ENCODE measurements at regions of chr12 and their contacts with region 1.

Region 1: DNA sequence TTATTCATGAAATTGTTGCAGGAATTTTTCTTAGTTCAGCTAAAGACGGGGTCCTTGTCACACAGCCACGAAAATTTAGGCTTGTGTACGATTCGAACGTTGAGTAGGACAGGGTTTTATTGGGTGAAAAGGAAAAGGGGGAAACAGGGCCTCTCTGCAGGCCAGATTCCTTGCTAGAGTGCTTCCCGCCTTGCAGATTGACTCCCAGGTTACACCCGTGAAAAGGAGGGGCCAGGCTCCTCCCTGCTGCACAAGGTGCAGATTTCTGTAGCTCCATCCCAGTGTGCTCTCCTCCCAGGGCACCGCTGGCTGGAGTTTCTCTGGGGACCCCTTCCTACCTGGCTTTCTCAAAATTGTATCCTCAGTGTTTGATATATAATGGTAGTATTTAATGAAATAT is 221.5 kb downstream of the ERC1 start:
- DNase-seq: no peak
- ATAC-seq: no peak
- H3K4me3 Mint-ChIP-seq: no peak overlapping the region
- H3K27ac Mint-ChIP-seq: no peak overlapping the region
- H3K4me1 Mint-ChIP-seq: peaks cover 21% of the 10 kb centered on the region
- H3K27me3 Mint-ChIP-seq: no peaks in the 10 kb centered on the region

Region 2: GRCh38 chr12:1226951-1227350 is 14.4 kb after region 1 on chr12:
- CTCF ChIA-PET with region 1: interaction called, 3 read pairs
- POLR2A ChIA-PET with region 1: interaction called, 5 read pairs
- intact Hi-C with region 1: loop called (anchors 1 kb)
- DNase-seq: no peak
- ATAC-seq: peak; percentile 83
- H3K4me3 Mint-ChIP-seq: no peak overlapping the region
- H3K27ac Mint-ChIP-seq: no peak overlapping the region
- H3K4me1 Mint-ChIP-seq: peaks cover 25% of the 10 kb centered on the region
- H3K27me3 Mint-ChIP-seq: no peaks in the 10 kb centered on the region

Region 3: DNA sequence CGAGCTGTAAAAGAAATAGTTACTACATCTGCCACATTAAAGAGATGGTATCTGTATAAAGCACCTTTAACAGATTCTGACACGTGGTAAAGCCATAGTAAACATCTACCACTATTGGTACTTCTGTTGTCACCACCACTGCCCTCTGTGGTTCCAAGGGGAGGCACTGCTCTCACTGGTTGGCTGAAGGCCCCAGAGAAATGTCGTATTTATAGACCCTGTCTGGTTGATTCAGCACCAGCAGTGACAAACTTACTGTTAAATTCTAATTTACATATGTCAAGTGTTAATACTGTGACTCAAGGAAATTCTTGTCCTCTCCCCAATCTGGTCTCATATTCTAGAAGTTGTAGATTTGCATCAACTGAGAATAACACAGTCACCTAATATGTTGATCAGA is 59.6 kb after region 1 on chr12:
- CTCF ChIA-PET with region 1: no interaction called
- POLR2A ChIA-PET with region 1: no interaction called
- intact Hi-C with region 1: no loop called
- DNase-seq: peak; percentile 18
- ATAC-seq: no peak
- H3K4me3 Mint-ChIP-seq: no peak overlapping the region
- H3K27ac Mint-ChIP-seq: no peak overlapping the region
- H3K4me1 Mint-ChIP-seq: no peaks in the 10 kb centered on the region
- H3K27me3 Mint-ChIP-seq: no peaks in the 10 kb centered on the region

Measured in activated CD4-positive, alpha-beta T cell treated with anti-CD3 and anti-CD28 coated beads for 36 hours (primary cell).